BJ (cell line): ENCODE measurements at regions of chr13 and their contacts with region 1.

Region 1: DNA sequence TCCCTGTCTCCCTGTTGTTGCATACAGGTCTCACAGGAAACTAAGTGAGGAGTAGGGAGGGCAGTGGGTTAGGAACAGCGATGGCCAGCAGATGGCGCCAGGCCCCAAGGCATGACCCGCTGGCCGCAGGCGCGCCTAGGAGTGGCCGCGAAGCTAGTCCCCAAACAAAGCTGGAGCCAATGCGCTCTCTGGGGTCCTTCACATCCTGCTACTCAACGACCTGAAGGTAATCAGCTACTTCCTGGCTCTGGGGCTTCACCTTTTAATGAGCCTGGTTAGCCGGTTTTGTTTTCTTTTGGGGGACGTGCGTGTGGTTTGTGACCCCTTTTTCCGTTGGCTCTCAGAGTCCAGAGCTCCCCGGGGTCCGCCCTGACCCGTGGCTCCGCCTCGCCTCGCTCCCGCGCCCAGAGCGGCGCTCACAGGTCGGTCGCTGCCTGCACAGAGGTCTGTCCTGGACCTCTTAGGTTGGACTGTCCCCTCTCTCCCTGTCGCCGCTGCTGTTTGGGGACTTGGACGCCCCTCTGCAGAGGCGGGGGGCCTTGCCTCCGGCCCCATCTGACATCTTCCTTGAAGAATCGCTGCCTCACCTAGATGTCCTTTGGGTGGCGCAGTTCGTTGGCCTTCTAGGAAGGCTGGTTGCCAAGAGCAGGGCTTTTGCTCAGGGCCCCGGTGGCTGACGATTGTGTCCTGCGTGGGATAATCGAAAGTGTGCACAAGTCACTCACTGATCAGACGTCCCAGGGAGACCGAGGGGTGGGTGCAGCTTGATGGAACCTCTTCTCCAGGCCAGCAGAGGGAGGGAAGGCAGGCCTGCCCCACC is 62.1 kb upstream of the GTF3A start:
- DNase-seq: no peak
- H3K4me3 ChIP-seq: peak overlapping the region; percentile 40
- H3K27me3 ChIP-seq: peaks cover 7% of the 10 kb centered on the region; the same call in 1 of the 2 replicates
- CTCF ChIP-seq: peak; percentile 98

Region 2: DNA sequence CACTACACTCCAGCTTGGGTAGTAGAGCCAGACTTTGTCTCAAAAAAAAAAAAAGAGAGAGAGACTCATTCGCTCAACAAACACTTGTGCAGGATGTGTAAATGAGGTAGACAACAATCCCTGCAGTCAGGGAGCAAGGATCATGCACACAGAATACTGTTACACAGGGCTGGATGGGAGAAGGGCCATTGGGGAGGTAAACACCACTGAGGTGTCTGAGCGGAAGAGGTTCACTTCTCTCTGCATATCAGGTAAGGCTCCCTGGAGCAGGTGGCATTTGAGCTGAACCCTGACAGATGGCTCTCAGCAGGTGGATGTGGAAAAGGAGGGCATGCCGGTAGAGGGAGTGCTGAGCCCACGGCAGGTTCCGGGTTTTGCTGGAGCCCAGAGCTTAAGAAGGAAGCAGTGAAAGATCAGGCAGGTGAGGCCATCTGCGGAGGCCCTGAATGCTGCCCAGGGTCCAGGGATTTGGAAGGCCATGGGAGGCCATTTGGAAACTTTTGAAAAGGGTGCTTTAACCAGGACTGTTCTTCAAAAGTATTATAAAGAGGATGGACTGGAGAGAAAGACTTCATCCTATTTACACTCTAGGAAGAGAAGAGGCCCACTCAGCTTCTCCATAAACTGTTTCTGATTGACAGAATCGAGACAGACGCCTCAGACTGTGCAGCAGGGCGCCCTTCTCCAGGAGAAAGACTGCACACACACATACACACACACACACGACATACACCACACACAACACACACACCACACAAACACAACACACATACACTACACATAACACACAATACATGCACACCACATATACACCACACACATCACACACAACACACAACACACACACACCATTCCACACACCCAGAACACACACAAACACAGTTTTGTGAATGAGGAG is 390.0 kb before region 1 on chr13:
- CTCF ChIA-PET with region 1: interaction called, 29 read pairs
- POLR2A ChIA-PET with region 1: no interaction called
- DNase-seq: no peak
- H3K4me3 ChIP-seq: no peak overlapping the region
- H3K27me3 ChIP-seq: peaks cover 4% of the 10 kb centered on the region
- CTCF ChIP-seq: peak; percentile 61

Region 3: DNA sequence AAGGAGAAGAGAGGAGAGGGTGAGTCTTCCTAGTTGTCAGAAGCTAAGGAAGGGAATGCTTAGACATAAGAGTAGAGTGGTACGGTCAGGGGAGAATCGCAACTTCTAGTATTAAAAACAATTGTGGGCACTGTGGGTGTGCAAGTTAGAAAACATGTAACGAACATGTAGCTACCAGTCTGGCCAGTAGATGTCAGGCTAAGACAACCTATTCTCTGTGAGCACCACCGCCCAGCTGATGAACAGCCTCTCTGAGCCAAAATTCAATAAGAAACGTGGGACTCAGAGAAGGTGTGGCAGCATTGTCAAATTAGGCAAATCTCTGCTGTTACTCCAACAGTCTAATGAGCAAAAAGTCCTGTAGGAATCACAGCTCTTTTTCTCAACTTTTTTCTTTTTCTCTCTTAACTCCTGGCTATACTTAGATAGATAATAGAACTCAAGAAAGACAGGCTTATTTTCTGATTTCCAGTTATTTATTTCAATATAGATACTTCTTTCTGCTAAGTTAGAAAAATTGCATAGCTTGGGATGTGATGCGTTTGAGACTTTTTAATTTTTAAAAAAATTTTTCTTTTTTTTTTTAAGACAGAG is 376.9 kb before region 1 on chr13:
- CTCF ChIA-PET with region 1: interaction called, 227 read pairs
- POLR2A ChIA-PET with region 1: no interaction called
- DNase-seq: no peak
- H3K4me3 ChIP-seq: no peak overlapping the region
- H3K27me3 ChIP-seq: no peaks in the 10 kb centered on the region; the same call in 1 of the 2 replicates
- CTCF ChIP-seq: peak; percentile 65

Region 4: GRCh38 chr13:27339299-27339698 is 23.0 kb before region 1 on chr13:
- CTCF ChIA-PET with region 1: interaction called, 13 read pairs
- POLR2A ChIA-PET with region 1: no interaction called
- DNase-seq: no peak
- H3K4me3 ChIP-seq: no peak overlapping the region
- H3K27me3 ChIP-seq: peaks cover 14% of the 10 kb centered on the region
- CTCF ChIP-seq: peak; percentile 71

Region 5: GRCh38 chr13:27472941-27473340 is 110.7 kb after region 1 on chr13:
- CTCF ChIA-PET with region 1: no interaction called
- POLR2A ChIA-PET with region 1: no interaction called
- DNase-seq: no peak
- H3K4me3 ChIP-seq: no peak overlapping the region
- H3K27me3 ChIP-seq: peaks cover 2% of the 10 kb centered on the region
- CTCF ChIP-seq: no peak

Region 6: GRCh38 chr13:27533155-27533643 is 170.9 kb after region 1 on chr13:
- CTCF ChIA-PET with region 1: interaction called, 11 read pairs
- POLR2A ChIA-PET with region 1: no interaction called
- DNase-seq: no peak
- H3K4me3 ChIP-seq: no peak overlapping the region
- H3K27me3 ChIP-seq: 0 out of 2 replicates have a peak, but pooled peaks cover 3% of the 10 kb centered on the region
- CTCF ChIP-seq: peak; percentile 99

Region 7: GRCh38 chr13:27977476-27978300 is 615.4 kb after region 1 on chr13:
- CTCF ChIA-PET with region 1: interaction called, 91 read pairs
- POLR2A ChIA-PET with region 1: no interaction called
- DNase-seq: no peak
- H3K4me3 ChIP-seq: no peak overlapping the region
- H3K27me3 ChIP-seq: peaks cover 72% of the 10 kb centered on the region
- CTCF ChIP-seq: no peak